ENCODE measurements at regions of chr3 and their contacts with region 1.

Region 1: GRCh38 chr3:71641674-71642073 is 58.1 kb upstream of the FOXP1 start:
- DNase-seq: no peak
- ATAC-seq: no peak
- H3K4me3 ChIP-seq: no peak overlapping the region
- H3K27ac ChIP-seq: no peak overlapping the region
- H3K4me1 ChIP-seq: no peaks in the 10 kb centered on the region
- H3K27me3 ChIP-seq: no peaks in the 10 kb centered on the region
- CTCF ChIP-seq: no peak
- POLR2A ChIP-seq: no peak

Region 2: GRCh38 chr3:71599416-71599815 is 42.3 kb before region 1 on chr3:
- intact Hi-C with region 1: loop called in 1 of 2 experiments (anchors 10 kb)
- DNase-seq: no peak
- ATAC-seq: peak in 1 of 4 donors; percentile 48
- H3K4me3 ChIP-seq: no peak overlapping the region
- H3K27ac ChIP-seq: no peak overlapping the region
- H3K4me1 ChIP-seq: no peaks in the 10 kb centered on the region
- H3K27me3 ChIP-seq: no peaks in the 10 kb centered on the region
- CTCF ChIP-seq: no peak
- POLR2A ChIP-seq: no peak

Region 3: DNA sequence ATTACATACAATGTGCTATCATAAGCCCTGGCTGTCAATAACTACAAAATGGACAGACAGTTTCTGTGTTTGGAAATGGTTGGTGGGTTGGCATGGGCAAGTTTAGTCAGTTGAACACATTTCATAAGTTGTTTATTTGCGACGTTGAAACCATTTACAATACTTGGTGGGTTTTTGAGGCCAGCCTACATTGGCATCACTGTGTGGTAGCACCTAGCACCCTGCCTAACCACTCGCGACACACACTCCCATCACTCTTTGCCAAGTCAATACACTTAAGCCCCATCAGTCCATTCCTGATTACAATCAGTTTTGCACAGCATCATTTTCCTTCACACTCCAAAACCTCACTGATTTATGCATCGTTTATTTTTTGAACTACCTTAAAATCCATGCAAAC is 129.5 kb after region 1 on chr3:
- intact Hi-C with region 1: no loop called
- DNase-seq: no peak
- ATAC-seq: no peak
- H3K4me3 ChIP-seq: no peak overlapping the region
- H3K27ac ChIP-seq: no peak overlapping the region
- H3K4me1 ChIP-seq: no peaks in the 10 kb centered on the region
- H3K27me3 ChIP-seq: peaks cover 0 to 4% of the 10 kb centered on the region in 2 donors
- CTCF ChIP-seq: no peak
- POLR2A ChIP-seq: no peak

Region 4: GRCh38 chr3:71838406-71838805 is 196.7 kb after region 1 on chr3:
- intact Hi-C with region 1: no loop called
- DNase-seq: no peak
- ATAC-seq: no peak
- H3K4me3 ChIP-seq: no peak overlapping the region
- H3K27ac ChIP-seq: no peak overlapping the region
- H3K4me1 ChIP-seq: no peaks in the 10 kb centered on the region
- H3K27me3 ChIP-seq: no peaks in the 10 kb centered on the region
- CTCF ChIP-seq: no peak
- POLR2A ChIP-seq: no peak